ENCODE measurements at regions of chr1 and their contacts with region 1.

Region 1: GRCh38 chr1:9196129-9197040 is 38.2 kb upstream of the H6PD start:
- DNase-seq: peak; percentile 49 to 56
- ATAC-seq: peak; percentile 67 to 75
- H3K4me3 ChIP-seq: peak overlapping the region; percentile 1 to 34 (median 10)
- H3K27ac ChIP-seq: peak overlapping the region; percentile 48 to 58 (median 54)
- H3K4me1 ChIP-seq: peaks cover 21 to 29% of the 10 kb centered on the region in 2 donors
- H3K27me3 ChIP-seq: peaks cover 21 to 30% (median 28%) of the 10 kb centered on the region in 3 donors
- CTCF ChIP-seq: peak; percentile 72 to 86 (median 80)
- POLR2A ChIP-seq: no peak

Region 2: GRCh38 chr1:8903908-8904650 is 292.3 kb before region 1 on chr1:
- in situ Hi-C with region 1: loop called in 2 of 4 experiments (anchors 25 kb)
- intact Hi-C with region 1: no loop called
- DNase-seq: peak; percentile 9 to 49
- ATAC-seq: peak; percentile 35 to 69
- H3K4me3 ChIP-seq: no peak overlapping the region
- H3K27ac ChIP-seq: no peak overlapping the region
- H3K4me1 ChIP-seq: no peaks in the 10 kb centered on the region
- H3K27me3 ChIP-seq: no peaks in the 10 kb centered on the region
- CTCF ChIP-seq: no peak
- POLR2A ChIP-seq: no peak

Region 3: DNA sequence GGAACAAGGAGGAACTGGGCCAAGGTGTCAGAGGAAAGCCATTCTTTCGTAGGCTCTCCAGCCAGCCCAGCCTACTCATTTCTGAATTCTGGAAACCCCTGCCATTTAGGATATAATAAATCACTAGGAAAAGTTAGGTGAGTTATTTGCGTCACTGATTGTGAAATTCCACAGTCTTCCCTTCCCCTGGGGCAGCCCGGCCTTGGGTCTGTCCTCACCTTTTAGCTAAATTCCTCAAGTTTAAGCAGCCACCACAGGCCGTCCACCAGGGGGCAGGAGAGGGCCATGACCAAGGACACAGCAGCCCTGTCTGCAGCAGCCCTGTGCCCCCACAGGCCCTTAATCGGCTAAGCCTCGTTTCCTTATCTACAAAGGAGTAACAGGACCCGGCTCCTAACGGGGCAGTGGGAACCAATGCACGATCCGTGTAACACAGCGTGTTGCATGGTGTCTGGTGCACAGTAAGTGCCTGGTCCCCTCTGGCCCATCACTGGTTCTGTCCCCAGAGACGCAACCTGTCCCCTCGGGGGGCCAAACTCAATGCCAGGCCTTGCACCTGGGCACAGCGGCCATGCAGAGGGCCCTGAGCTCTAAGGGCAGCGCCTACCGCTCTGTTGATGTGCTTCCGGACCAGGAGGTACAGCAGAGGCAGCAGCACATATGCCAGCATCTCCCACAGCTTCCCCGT is 85.6 kb before region 1 on chr1:
- in situ Hi-C with region 1: loop called in 2 of 4 experiments (anchors 5 kb)
- intact Hi-C with region 1: loop called (anchors 1 kb)
- DNase-seq: peak; percentile 69 to 83
- ATAC-seq: peak; percentile 22 to 42
- H3K4me3 ChIP-seq: no peak overlapping the region
- H3K27ac ChIP-seq: peak overlapping the region in 1 of 4 donors; percentile 18
- H3K4me1 ChIP-seq: peaks cover 0 to 4% of the 10 kb centered on the region in 2 donors
- H3K27me3 ChIP-seq: no peaks in the 10 kb centered on the region
- CTCF ChIP-seq: peak; percentile 92 to 96 (median 94)
- POLR2A ChIP-seq: no peak

Region 4: GRCh38 chr1:9128520-9129265 is 67.7 kb before region 1 on chr1 and contains the start of gene GPR157:
- in situ Hi-C with region 1: loop called in 1 of 4 experiments (anchors 10 kb)
- intact Hi-C with region 1: no loop called
- DNase-seq: peak; percentile 86 to 87
- ATAC-seq: peak; percentile 53 to 65
- H3K4me3 ChIP-seq: peak within 1 kb of the TSS; percentile 72 to 97 (median 82)
- H3K27ac ChIP-seq: peak within 1 kb of the TSS; percentile 94 to 99 (median 98)
- H3K4me1 ChIP-seq: peaks cover 26 to 39% of the 10 kb centered on the region in 2 donors
- H3K27me3 ChIP-seq: no peaks in the 10 kb centered on the region
- CTCF ChIP-seq: peak in 4 of 5 experiments; percentile 22 to 43 (median 37)
- POLR2A ChIP-seq: peak; percentile 96 to 97
- total RNA-seq, gene GPR157: 12.9 to 38.1 (median 18.9) TPM

Region 5: DNA sequence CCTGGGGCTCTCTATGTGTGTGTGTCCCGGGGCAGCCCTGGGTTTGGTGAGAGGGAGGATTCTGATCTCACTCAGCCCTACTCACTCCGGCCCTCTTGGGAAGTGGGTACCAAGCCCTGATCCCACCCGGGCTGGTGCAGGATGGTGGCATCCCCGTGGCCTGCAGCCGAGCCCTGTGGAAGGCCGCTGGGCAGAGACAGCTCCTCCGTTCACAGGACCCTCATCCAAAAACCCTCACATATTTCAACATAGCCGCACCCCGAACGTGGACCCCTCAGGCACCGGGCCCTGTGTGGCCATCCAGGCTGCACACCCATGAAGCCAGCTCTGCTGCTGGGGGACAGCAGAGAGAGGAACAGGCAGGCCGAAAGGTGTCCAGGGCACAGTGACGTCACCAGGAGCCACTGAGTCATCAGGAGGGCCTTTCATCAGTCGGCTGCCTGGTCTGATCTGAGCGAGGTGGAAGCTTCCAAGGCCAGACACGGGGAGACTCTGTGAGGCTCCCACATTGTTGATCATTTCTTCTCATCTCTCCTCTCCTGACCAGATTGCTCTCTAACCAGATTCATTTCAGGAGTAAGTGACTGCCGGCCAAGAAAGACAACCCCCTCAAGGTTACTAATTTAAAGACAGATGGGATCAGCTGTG is 51.2 kb before region 1 on chr1:
- in situ Hi-C with region 1: loop called in 1 of 4 experiments (anchors 10 kb)
- intact Hi-C with region 1: loop called (anchors 1 kb)
- DNase-seq: no peak
- ATAC-seq: no peak
- H3K4me3 ChIP-seq: no peak overlapping the region
- H3K27ac ChIP-seq: no peak overlapping the region
- H3K4me1 ChIP-seq: peaks cover 8% of the 10 kb centered on the region in 2 donors
- H3K27me3 ChIP-seq: no peaks in the 10 kb centered on the region
- CTCF ChIP-seq: no peak
- POLR2A ChIP-seq: no peak

Region 6: DNA sequence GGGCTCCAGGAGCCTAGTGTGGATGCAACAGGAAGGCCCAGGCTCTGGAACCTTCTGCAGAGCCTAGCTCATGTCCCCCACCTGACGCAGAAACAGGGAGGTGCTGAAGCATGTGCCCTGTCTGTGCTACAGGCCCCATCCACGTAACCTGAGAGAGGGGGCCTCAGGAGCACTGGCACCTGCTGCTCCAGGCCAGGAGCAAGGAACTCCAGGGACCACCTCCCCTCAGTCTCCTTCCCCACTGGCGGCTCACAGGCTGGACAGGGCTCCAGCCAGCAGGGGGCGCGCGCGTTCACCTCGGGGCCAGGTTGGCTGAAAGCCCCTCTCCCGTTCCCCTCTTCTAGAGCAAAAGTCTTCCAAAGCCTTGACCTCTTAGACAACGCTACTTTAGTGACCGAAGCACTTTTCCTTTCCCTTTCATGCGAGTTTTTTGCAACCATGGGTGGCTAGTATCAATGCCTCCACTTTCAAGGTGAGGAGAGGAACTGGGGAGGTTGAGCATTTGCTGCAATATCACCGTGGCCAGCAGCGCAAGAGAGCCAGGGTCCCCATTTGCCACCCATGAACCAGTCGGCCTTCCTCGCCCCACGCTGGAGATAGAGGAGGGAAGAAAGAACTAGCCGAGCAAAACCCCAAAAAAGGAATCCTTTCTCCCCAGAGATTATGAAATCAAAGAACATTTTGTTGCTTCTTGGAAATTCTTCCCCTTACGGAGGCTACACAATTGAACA is 15.0 kb before region 1 on chr1:
- in situ Hi-C with region 1: no loop called
- intact Hi-C with region 1: loop called (anchors 1 kb)
- DNase-seq: peak in 1 of 2 donors; percentile 52
- ATAC-seq: peak; percentile 44 to 84
- H3K4me3 ChIP-seq: peak overlapping the region; percentile 60 to 76 (median 64)
- H3K27ac ChIP-seq: no peak overlapping the region
- H3K4me1 ChIP-seq: peaks cover 0 to 3% of the 10 kb centered on the region in 2 donors
- H3K27me3 ChIP-seq: peaks cover 0 to 8% (median 8%) of the 10 kb centered on the region in 3 donors
- CTCF ChIP-seq: peak; percentile 70 to 97 (median 94)
- POLR2A ChIP-seq: no peak